K562 (cell line): ENCODE measurements at regions of chr18 and their contacts with region 1.

Region 1: DNA sequence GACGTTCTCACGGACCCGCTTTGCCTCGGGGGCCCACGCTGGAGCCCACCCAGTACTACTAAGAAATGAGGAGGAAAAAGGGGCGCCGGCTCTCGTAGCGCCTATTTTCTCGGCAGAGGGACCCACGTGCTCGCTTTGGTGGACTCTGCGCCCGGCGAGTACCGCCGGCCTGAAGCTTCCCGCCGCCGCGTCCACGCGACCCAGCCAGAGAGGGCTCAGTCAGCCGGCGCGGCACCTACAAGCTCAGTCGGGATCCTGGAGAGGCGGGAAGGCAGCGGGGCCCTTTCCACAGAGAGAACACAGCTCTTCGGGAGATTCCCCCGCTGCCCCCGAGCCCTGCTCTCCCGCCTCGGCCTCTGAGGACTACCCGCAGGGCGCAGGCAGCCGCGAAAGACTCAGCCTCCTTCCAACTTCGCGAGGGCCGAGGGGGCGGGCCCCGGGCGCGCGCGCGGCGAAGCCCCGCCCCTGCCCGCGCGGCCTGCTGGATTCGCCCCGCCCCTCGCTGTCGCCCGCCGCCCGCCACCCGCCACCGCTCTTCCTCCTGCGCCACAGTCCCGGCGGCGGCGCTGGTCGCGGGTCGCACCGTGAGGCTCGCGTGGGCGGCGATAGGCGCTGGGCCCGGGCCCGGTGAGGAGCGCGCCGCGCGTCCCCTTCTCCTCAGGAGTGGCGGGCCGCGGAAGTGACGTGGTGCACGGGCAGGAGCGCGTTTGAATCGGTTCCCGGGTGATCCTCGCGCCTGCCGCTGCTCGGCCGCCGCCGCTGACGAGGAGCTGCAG is at the start of gene SMCHD1:
- DNase-seq: peak; percentile 93 to 95 (median 94)
- ATAC-seq: peak; percentile 83
- H3K4me3 ChIP-seq: peak within 1 kb of the TSS; percentile 86
- H3K27ac ChIP-seq: peak within 1 kb of the TSS; percentile 94
- H3K4me1 ChIP-seq: peaks cover 16 to 24% of the 10 kb centered on the region in 2 experiments; a peak in 4 of 5 replicates
- H3K27me3 ChIP-seq: no peaks in the 10 kb centered on the region
- CTCF ChIP-seq: 0 out of 6 replicates have a peak, but pooled peaks of 1 of the 3 experiments have one; percentile 3
- EP300 ChIP-seq: no peak
- POLR2A ChIP-seq: peak; percentile 98
- RAD21 ChIP-seq: no peak
- polyA plus RNA-seq, gene SMCHD1: 6.3 to 6.6 TPM

Region 2: DNA sequence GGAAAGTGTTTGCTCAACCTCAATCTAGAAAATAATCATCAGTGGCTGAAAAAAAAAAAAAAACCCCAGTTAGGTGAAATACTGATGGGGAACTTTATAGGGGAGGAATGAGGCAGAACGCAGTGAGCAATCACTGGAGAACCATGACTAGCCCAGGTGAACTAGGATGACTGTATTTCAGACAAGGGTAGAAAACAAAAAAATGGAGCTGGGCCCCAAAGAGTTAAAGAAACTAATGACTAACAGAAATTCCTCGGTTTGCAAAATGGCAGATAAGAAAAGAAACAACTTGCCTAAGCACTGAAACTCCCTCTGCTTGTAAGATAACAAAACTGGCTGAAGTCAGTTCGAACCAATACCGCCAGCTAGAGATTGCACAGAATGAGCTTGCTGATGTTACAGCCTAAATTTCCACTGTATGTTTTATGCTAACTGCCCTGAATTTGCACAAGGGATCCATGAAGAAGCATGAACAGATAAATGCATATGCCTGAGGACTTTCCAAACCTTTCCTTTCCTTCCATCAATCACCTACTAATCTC is 330.0 kb before region 1 on chr18:
- CTCF ChIA-PET with region 1: no interaction called
- POLR2A ChIA-PET with region 1: no interaction called
- in situ Hi-C with region 1: no loop called
- intact Hi-C with region 1: loop called (anchors 5 kb)
- DNase-seq: peak; percentile 37 to 91 (median 57)
- ATAC-seq: peak; percentile 93
- H3K4me3 ChIP-seq: no peak overlapping the region
- H3K27ac ChIP-seq: peak overlapping the region; percentile 62
- H3K4me1 ChIP-seq: peaks cover 4 to 30% of the 10 kb centered on the region in 2 experiments; a peak in 4 of 5 replicates
- H3K27me3 ChIP-seq: no peaks in the 10 kb centered on the region
- CTCF ChIP-seq: peak in 1 of 3 experiments; percentile 46; a peak in 2 of 6 replicates
- EP300 ChIP-seq: peak; percentile 97
- POLR2A ChIP-seq: no peak
- RAD21 ChIP-seq: peak; percentile 43 to 55

Region 3: DNA sequence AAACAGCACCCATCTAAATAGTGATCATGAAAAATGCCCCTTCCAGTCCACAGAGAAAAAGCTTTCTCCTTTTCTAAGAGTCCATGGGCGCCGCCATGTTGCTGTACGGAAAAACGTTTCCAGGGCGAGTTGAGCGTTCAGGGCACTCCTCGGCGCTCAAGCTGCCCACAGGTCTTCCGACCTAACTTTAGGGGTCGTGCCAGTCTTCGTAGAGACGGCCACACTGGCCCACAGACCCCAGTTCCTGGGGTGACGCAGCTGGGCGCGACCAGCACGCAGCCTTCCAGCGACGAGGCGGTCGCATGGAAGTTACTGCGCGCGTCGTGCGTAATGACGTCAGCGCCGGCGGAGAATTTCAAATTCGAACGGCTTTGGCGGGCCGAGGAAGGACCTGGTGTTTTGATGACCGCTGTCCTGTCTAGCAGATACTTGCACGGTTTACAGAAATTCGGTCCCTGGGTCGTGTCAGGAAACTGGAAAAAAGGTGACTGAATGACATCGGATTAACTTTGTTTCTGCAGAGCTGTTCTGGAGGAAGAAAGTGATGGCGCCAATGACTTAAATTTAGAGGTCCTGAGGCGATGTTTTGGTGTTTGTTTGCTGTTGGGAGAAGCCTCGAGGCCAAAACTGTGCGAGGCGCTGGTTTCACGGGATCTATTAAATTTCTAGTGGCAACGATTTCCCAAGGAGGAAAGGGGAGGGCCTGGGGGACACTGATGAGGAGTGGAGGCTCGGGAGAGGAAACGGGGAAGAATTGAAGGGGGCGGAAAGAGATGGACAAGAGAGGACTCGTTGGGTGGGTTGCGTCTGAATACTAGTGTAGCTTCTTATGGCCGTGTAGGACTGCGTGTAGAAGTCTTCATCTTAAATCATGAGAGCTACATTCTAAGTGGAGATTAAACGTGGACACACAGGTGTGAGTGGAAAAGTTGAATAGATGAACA is 83.9 kb before region 1 on chr18 and contains the starts of genes METTL4 and NDC80:
- CTCF ChIA-PET with region 1: no interaction called
- POLR2A ChIA-PET with region 1: interaction called, 4 read pairs
- in situ Hi-C with region 1: no loop called
- intact Hi-C with region 1: loop called (anchors 5 kb)
- DNase-seq: peak; percentile 86 to 97 (median 87)
- ATAC-seq: peak; percentile 79
- H3K4me3 ChIP-seq: peak within 1 kb of the TSS; percentile 61
- H3K27ac ChIP-seq: peak within 1 kb of the TSS; percentile 98
- H3K4me1 ChIP-seq: peaks cover 10 to 18% of the 10 kb centered on the region in 2 experiments; a peak in 3 of 5 replicates
- H3K27me3 ChIP-seq: no peaks in the 10 kb centered on the region
- CTCF ChIP-seq: 0 out of 6 replicates have a peak, but pooled peaks of 1 of the 3 experiments have one; percentile 9
- EP300 ChIP-seq: peak; percentile 55
- POLR2A ChIP-seq: peak; percentile 86
- RAD21 ChIP-seq: no peak
- polyA plus RNA-seq, gene METTL4: 27.1 to 32.8 TPM
- polyA plus RNA-seq, gene NDC80: 89.3 to 97.9 TPM

Region 4: DNA sequence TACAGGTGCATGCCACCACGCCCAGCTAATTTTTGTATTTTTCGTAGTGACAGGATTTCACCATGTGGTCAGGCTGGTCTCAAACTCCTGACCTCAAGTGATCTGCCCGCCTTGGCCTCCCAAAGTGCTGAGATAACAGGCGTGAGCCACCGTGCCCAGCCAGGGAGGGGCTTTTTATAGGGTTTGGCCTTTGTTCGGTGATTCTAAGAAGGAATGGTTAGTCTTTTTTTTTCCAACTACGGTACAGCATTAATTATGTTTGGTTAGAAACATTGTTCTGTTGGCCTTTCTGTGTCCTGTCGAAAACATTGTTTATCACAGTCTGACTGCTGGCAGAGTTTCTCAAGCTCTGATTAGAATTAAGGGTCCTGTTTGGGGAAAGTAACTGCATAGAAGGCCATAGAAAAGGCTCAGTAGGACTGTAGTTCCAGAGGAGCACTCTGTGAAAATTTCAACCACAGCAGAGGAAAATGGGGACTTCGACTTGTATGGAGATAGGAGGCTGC is 19.2 kb before region 1 on chr18:
- CTCF ChIA-PET with region 1: no interaction called
- POLR2A ChIA-PET with region 1: interaction called, 11 read pairs
- in situ Hi-C with region 1: no loop called
- intact Hi-C with region 1: no loop called
- DNase-seq: no peak
- ATAC-seq: peak; percentile 36; the same call in 2 of the 3 replicates
- H3K4me3 ChIP-seq: no peak overlapping the region
- H3K27ac ChIP-seq: no peak overlapping the region
- H3K4me1 ChIP-seq: 0 out of 5 replicates have a peak, but pooled peaks cover 0 to 2% of the 10 kb centered on the region in 2 experiments
- H3K27me3 ChIP-seq: no peaks in the 10 kb centered on the region
- CTCF ChIP-seq: no peak
- EP300 ChIP-seq: no peak
- POLR2A ChIP-seq: no peak
- RAD21 ChIP-seq: no peak

Region 5: GRCh38 chr18:2641638-2642037 is 13.7 kb before region 1 on chr18:
- CTCF ChIA-PET with region 1: no interaction called
- POLR2A ChIA-PET with region 1: interaction called, 13 read pairs
- in situ Hi-C with region 1: no loop called
- intact Hi-C with region 1: no loop called
- DNase-seq: peak in 1 of 4 experiments; percentile 7
- ATAC-seq: no peak
- H3K4me3 ChIP-seq: no peak overlapping the region
- H3K27ac ChIP-seq: no peak overlapping the region
- H3K4me1 ChIP-seq: no peaks in the 10 kb centered on the region
- H3K27me3 ChIP-seq: 0 out of 5 replicates have a peak, but pooled peaks cover 0 to 4% of the 10 kb centered on the region in 2 experiments
- CTCF ChIP-seq: no peak
- EP300 ChIP-seq: no peak
- POLR2A ChIP-seq: no peak
- RAD21 ChIP-seq: no peak

Region 6: DNA sequence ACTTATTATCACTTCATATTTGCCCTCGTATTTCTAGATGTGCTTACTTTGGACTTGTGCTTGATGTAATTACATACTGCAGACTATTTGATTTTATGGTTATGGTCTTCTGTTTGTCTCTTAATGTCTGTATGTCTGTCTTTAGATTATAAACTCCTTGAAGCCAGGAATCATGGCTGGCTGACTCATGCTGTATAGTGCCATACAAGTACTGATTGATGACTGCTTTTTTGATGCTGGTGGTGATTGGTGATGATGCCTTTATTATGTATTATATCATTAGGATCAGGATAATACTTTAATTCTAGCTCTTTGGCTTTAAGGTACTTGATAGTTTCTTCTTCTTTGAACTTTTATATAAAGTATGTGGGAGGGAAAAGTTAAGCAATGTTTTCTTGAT is 17.5 kb after region 1 on chr18:
- CTCF ChIA-PET with region 1: no interaction called
- POLR2A ChIA-PET with region 1: interaction called, 16 read pairs
- in situ Hi-C with region 1: no loop called
- intact Hi-C with region 1: no loop called
- DNase-seq: no peak
- ATAC-seq: no peak
- H3K4me3 ChIP-seq: no peak overlapping the region
- H3K27ac ChIP-seq: no peak overlapping the region
- H3K4me1 ChIP-seq: no peaks in the 10 kb centered on the region
- H3K27me3 ChIP-seq: no peaks in the 10 kb centered on the region
- CTCF ChIP-seq: no peak
- EP300 ChIP-seq: no peak
- POLR2A ChIP-seq: no peak
- RAD21 ChIP-seq: no peak

Region 7: DNA sequence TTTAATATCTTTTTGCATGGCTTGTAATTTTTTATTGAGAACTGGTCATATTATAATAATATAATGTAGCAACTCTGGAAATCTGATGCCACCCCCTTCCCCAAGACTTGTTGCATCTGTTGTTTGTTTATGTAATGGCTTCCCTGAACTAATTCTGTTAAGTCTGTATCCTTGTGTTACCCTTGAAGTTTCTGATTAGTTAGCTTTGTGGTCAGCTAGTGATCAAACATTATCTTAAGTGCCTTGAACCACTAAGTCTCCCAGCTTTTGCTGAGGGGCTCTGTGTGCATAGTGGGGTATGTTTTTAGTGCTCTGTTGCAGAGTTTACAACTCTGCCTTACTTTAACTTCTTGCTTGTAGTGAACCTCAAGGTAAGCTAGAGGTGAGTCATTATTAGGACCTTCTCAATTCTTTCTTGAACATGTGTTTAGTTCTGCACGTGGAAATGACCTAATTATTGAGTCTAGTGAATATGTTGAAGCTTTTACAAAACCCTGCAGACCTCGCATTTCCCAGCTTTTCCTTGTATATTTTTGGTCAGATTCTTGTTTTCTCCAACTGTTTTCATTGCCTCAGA is 24.9 kb after region 1 on chr18:
- CTCF ChIA-PET with region 1: no interaction called
- POLR2A ChIA-PET with region 1: interaction called, 22 read pairs
- in situ Hi-C with region 1: no loop called
- intact Hi-C with region 1: no loop called
- DNase-seq: no peak
- ATAC-seq: peak; percentile 20; the same call in 1 of the 3 replicates
- H3K4me3 ChIP-seq: no peak overlapping the region
- H3K27ac ChIP-seq: no peak overlapping the region
- H3K4me1 ChIP-seq: no peaks in the 10 kb centered on the region; a peak in 1 of 5 replicates
- H3K27me3 ChIP-seq: no peaks in the 10 kb centered on the region
- CTCF ChIP-seq: no peak
- EP300 ChIP-seq: no peak
- POLR2A ChIP-seq: no peak
- RAD21 ChIP-seq: no peak